Breast epithelium (tissue), 4 donors: ENCODE measurements at regions of chr5 and their contacts with region 1.

Region 1: DNA sequence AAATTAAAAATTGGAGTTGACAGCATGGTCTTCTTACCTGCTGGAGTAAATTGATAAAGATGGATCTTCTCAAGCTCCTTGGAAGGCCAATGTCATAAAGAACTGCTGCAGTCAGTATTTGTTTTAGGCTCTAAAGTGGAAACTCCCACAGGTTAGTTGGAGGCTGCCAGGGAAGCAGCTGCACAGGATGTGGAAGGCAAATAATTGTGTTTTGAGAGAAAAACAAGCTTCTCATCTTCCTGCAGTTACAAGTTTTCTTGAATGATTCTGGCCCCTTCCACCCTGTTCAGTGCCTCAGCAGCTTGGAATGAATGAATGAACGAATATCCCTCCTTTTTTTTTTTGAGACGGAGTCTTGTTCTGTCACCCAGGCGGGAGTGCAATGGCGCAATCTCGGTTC is 13.9 kb downstream of the MROH2B start:
- DNase-seq: no peak
- H3K4me3 ChIP-seq: no peak overlapping the region
- H3K27ac ChIP-seq: no peak overlapping the region
- H3K4me1 ChIP-seq: no peaks in the 10 kb centered on the region
- H3K27me3 ChIP-seq: no peaks in the 10 kb centered on the region
- CTCF ChIP-seq: no peak
- POLR2A ChIP-seq: no peak

Region 2: DNA sequence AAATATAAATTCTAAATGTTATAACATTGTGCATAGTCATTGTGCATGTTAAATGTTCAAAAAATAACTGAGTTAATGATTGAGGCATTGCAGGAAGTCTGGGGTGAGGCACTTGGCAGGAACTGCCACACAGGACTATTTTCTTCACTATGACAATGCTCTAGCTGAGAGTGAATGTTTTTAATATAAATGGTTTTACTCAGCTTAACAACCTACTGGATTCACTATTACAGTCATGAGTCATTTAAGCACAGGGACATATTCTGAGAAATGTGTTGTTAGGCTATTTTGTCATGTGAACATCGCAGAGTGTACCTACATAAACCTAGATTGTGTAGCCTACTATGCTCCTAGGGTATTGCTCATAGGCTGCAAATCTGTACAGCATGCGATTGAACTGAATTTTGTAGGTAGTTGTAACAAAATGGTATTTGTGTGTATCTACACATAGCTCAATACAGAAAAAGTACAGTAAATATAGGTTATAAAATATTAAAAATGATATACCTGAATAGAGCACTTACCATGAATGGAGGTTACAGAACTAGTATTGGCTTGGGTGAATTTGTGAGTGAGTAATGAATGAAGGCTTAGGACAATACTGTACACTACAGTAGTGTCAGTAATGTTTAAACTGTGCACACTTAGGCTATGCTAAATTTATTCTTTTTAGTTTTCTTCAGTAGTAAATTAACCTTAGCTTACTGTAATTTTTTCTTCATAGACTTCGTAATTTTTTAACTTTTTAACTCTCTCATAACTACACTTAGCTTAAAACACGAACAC is 723.6 kb before region 1 on chr5:
- intact Hi-C with region 1: loop called (anchors 5 kb)
- DNase-seq: no peak
- H3K4me3 ChIP-seq: no peak overlapping the region
- H3K27ac ChIP-seq: no peak overlapping the region
- H3K4me1 ChIP-seq: no peaks in the 10 kb centered on the region
- H3K27me3 ChIP-seq: no peaks in the 10 kb centered on the region
- CTCF ChIP-seq: no peak
- POLR2A ChIP-seq: no peak